Pancreas (tissue), 10 donors: ENCODE measurements at regions of chr10 and their contacts with region 1.

Region 1: GRCh38 chr10:91919651-91920050 is 3.9 kb upstream of the BTAF1 start:
- DNase-seq: no peak
- ATAC-seq: no peak
- H3K4me3 ChIP-seq: no peak overlapping the region
- H3K27ac ChIP-seq: no peak overlapping the region
- H3K4me1 ChIP-seq: peaks cover 0 to 4% (median under 1%) of the 10 kb centered on the region in 3 donors
- H3K27me3 ChIP-seq: no peaks in the 10 kb centered on the region
- CTCF ChIP-seq: no peak

Region 2: GRCh38 chr10:91758303-91759146 is 161.1 kb before region 1 on chr10:
- intact Hi-C with region 1: loop called in 1 of 3 experiments (anchors 5 kb)
- DNase-seq: no peak
- ATAC-seq: peak; percentile 67 to 92 (median 84)
- H3K4me3 ChIP-seq: no peak overlapping the region
- H3K27ac ChIP-seq: no peak overlapping the region
- H3K4me1 ChIP-seq: no peaks in the 10 kb centered on the region
- H3K27me3 ChIP-seq: no peaks in the 10 kb centered on the region
- CTCF ChIP-seq: peak in 3 of 4 donors; percentile 28 to 32 (median 32)

Region 3: GRCh38 chr10:92011560-92012214 is 92.0 kb after region 1 on chr10:
- intact Hi-C with region 1: no loop called
- DNase-seq: no peak
- ATAC-seq: peak in 1 of 4 donors; percentile 47
- H3K4me3 ChIP-seq: no peak overlapping the region
- H3K27ac ChIP-seq: no peak overlapping the region
- H3K4me1 ChIP-seq: no peaks in the 10 kb centered on the region
- H3K27me3 ChIP-seq: no peaks in the 10 kb centered on the region
- CTCF ChIP-seq: no peak